PC-9 (cell line): ENCODE measurements at regions of chr1 and their contacts with region 1.

Region 1: GRCh38 chr1:203625628-203626019 is 1.0 kb upstream of the ATP2B4 start:
- DNase-seq: peak in 1 of 2 experiments; percentile 53
- H3K4me3 ChIP-seq: no peak overlapping the region
- H3K27ac ChIP-seq: peak overlapping the region; percentile 62
- H3K4me1 ChIP-seq: peaks cover 34% of the 10 kb centered on the region
- H3K27me3 ChIP-seq: no peaks in the 10 kb centered on the region
- CTCF ChIP-seq: no peak; the same call in 1 of the 2 replicates

Region 2: GRCh38 chr1:203512830-203513611 is 112.6 kb before region 1 on chr1:
- CTCF ChIA-PET with region 1: interaction called, 3 read pairs
- POLR2A ChIA-PET with region 1: interaction called, 3 read pairs
- intact Hi-C with region 1: loop called (anchors 1 kb)
- DNase-seq: peak; percentile 86 to 95
- H3K4me3 ChIP-seq: peak overlapping the region; percentile 49; the same call in 1 of the 2 replicates
- H3K27ac ChIP-seq: peak overlapping the region; percentile 97
- H3K4me1 ChIP-seq: peaks cover 83% of the 10 kb centered on the region
- H3K27me3 ChIP-seq: no peaks in the 10 kb centered on the region
- CTCF ChIP-seq: no peak

Region 3: GRCh38 chr1:203558064-203558760 is 67.4 kb before region 1 on chr1:
- CTCF ChIA-PET with region 1: no interaction called
- POLR2A ChIA-PET with region 1: interaction called, 4 read pairs
- intact Hi-C with region 1: loop called (anchors 5 kb)
- DNase-seq: peak; percentile 59 to 99
- H3K4me3 ChIP-seq: no peak overlapping the region
- H3K27ac ChIP-seq: peak overlapping the region; percentile 76
- H3K4me1 ChIP-seq: peaks cover 59% of the 10 kb centered on the region
- H3K27me3 ChIP-seq: no peaks in the 10 kb centered on the region
- CTCF ChIP-seq: no peak

Region 4: GRCh38 chr1:203673550-203674427 is 48.2 kb after region 1 on chr1:
- CTCF ChIA-PET with region 1: no interaction called
- POLR2A ChIA-PET with region 1: no interaction called
- intact Hi-C with region 1: loop called (anchors 1 kb)
- DNase-seq: peak; percentile 86 to 98
- H3K4me3 ChIP-seq: no peak overlapping the region
- H3K27ac ChIP-seq: peak overlapping the region; percentile 69
- H3K4me1 ChIP-seq: peaks cover 50% of the 10 kb centered on the region
- H3K27me3 ChIP-seq: no peaks in the 10 kb centered on the region
- CTCF ChIP-seq: peak; percentile 65

Region 5: DNA sequence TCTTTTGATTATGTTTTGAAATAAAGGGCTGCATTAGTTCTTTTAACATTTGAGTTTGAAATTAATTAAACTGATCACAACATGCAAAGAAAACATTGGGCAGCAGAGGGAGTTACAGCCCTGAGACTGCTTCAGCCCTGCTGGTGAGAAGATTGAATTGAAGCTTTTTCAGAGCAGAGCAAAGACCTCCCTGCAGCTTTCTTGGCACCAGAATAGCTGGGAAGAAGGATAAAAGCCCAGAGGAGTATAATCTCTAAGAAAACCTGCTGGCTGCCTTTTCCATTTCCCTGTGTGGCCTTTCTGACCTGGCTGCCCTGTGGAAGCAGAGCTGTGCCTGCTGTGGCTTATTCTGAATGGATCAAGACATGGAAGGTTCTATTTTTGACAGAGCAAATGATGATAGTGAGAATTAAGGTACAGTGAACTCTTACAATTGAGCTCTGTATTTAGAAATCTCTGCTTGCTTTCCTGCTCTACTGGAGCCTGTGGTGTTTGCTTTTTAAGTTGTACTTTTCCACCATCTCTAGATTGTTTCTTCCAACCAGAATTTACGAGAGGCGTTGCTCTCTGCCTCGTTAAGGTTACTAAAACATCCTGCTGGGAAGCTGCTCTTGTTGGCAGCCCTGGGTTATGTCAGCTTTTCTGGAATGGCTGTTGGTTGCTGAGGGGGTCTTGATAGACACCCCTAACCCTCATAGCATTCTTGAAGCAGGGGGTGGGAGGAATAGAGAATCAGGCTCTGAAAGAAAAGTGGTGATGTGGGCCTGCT is 245.7 kb after region 1 on chr1:
- CTCF ChIA-PET with region 1: no interaction called
- POLR2A ChIA-PET with region 1: interaction called, 14 read pairs
- intact Hi-C with region 1: no loop called
- DNase-seq: peak; percentile 41 to 60
- H3K4me3 ChIP-seq: no peak overlapping the region
- H3K27ac ChIP-seq: peak overlapping the region; percentile 63
- H3K4me1 ChIP-seq: peaks cover 33% of the 10 kb centered on the region
- H3K27me3 ChIP-seq: no peaks in the 10 kb centered on the region
- CTCF ChIP-seq: peak; percentile 92